PC-3 (cell line): ENCODE measurements at regions of chr2 and their contacts with region 1.

Region 1: DNA sequence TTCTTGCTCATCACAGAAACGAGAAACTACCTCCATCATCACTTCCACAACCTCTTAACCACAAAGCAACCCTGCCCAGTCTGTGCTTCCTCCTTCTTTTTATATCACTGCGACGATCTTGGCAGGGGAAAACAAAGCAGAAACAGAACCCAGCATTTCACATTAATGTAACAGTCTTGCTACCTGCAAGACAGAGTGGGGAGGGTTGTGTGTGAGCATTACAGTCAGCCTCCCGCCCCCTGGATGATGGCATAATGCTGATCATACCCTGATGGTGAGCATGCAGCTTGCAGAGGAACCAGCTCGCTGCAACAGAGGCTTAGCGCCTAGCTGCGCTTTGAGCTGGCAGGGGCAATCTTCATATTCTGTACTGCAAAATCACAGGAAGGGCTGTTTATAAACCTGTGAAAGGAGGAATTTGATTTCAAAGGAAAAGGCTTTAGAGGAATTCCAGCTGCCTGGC is 376.1 kb downstream of the IRS1 start:
- DNase-seq: peak; percentile 80
- ATAC-seq: peak; percentile 31
- H3K4me3 ChIP-seq: peak overlapping the region; percentile 33; the same call in 1 of the 2 replicates
- H3K27ac ChIP-seq: peak overlapping the region; percentile 95
- H3K4me1 ChIP-seq: peaks cover 56% of the 10 kb centered on the region
- H3K27me3 ChIP-seq: no peaks in the 10 kb centered on the region
- CTCF ChIP-seq: no peak

Region 2: GRCh38 chr2:225889446-225889850 is 534.1 kb before region 1 on chr2:
- CTCF ChIA-PET with region 1: no interaction called
- POLR2A ChIA-PET with region 1: no interaction called
- intact Hi-C with region 1: loop called (anchors 5 kb)
- DNase-seq: peak; percentile 75
- ATAC-seq: peak; percentile 94
- H3K4me3 ChIP-seq: no peak overlapping the region
- H3K27ac ChIP-seq: peak overlapping the region; percentile 66
- H3K4me1 ChIP-seq: peaks cover 23% of the 10 kb centered on the region
- H3K27me3 ChIP-seq: no peaks in the 10 kb centered on the region
- CTCF ChIP-seq: peak; percentile 84

Region 3: GRCh38 chr2:226247289-226248275 is 175.9 kb before region 1 on chr2:
- CTCF ChIA-PET with region 1: no interaction called
- POLR2A ChIA-PET with region 1: no interaction called
- intact Hi-C with region 1: loop called (anchors 10 kb)
- DNase-seq: peak; percentile 76
- ATAC-seq: peak; percentile 92
- H3K4me3 ChIP-seq: peak overlapping the region; percentile 33; the same call in 1 of the 2 replicates
- H3K27ac ChIP-seq: peak overlapping the region; percentile 78
- H3K4me1 ChIP-seq: peaks cover 27% of the 10 kb centered on the region
- H3K27me3 ChIP-seq: no peaks in the 10 kb centered on the region
- CTCF ChIP-seq: peak; percentile 29; the same call in 1 of the 2 replicates

Region 4: DNA sequence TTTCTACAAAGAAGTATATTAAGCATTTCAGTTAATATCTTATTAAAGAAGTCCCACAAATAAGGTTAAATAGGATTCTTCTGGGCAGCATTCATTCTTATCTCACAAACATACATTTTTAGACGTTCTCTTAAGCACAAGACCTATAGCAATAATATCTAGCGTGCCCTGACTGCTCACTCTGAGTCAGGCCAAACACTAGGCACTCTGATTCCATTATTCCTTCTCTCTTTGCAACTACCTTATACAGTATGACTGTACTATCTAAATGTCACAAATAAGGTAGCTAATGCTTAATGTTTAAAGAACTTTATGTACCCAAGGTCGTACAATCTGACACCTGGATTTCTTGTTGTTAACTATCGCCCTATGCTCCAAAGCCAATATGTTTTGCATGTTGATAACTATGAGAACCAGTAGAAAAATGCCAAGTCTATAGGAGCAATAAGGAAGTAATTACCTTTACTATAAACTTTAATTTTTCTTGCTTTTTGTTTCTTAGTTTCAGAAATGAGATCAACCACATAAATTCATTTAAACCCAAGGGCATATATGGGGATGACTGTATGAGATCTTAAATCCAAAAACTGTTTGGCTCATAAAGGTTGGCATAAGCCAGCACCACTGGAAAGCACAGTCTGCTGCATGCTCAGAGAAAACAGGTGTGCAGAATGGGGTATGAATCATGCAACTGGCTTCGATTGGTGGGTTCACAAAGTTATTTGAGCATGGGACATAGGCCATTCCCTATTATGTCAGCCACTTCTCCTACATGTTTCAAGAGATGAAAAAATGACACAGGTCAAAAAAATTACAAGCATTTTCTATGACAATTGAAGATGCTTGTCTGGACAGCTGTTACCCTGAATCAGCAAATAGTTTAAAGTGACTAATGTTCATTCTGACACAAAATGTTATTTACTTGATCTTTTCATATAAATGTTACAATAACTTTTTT is 24.1 kb after region 1 on chr2:
- CTCF ChIA-PET with region 1: no interaction called
- POLR2A ChIA-PET with region 1: interaction called, 7 read pairs
- intact Hi-C with region 1: loop called (anchors 2 kb)
- DNase-seq: peak; percentile 84
- ATAC-seq: peak; percentile 78
- H3K4me3 ChIP-seq: no peak overlapping the region
- H3K27ac ChIP-seq: no peak overlapping the region
- H3K4me1 ChIP-seq: peaks cover 15% of the 10 kb centered on the region
- H3K27me3 ChIP-seq: no peaks in the 10 kb centered on the region
- CTCF ChIP-seq: no peak

Region 5: DNA sequence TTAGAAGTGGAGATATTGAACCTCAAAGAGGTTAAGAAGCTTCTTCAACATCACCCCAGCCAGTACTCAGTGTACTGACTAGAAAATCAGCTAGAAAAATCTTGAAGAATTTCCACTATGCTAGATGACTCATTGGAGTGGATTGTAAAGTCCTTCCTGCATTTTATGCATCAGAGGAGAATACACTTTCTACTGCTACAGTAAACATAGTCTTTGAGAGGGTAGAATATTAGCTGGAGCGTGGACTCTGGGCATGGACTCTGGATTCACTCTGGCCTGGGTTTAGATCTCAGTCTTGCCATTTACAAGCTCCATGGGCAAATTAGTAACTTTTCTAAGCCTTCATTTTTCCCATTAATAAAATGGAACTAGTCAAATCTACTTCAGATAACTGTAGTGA is 160.2 kb after region 1 on chr2:
- CTCF ChIA-PET with region 1: no interaction called
- POLR2A ChIA-PET with region 1: no interaction called
- intact Hi-C with region 1: loop called (anchors 10 kb)
- DNase-seq: peak; percentile 94
- ATAC-seq: peak; percentile 98
- H3K4me3 ChIP-seq: no peak overlapping the region
- H3K27ac ChIP-seq: peak overlapping the region; percentile 33; the same call in 1 of the 2 replicates
- H3K4me1 ChIP-seq: peaks cover 23% of the 10 kb centered on the region
- H3K27me3 ChIP-seq: no peaks in the 10 kb centered on the region
- CTCF ChIP-seq: no peak

Region 6: GRCh38 chr2:226649871-226650660 is 226.5 kb after region 1 on chr2:
- CTCF ChIA-PET with region 1: no interaction called
- POLR2A ChIA-PET with region 1: interaction called, 3 read pairs
- intact Hi-C with region 1: loop called (anchors 1 kb)
- DNase-seq: peak; percentile 98
- ATAC-seq: peak; percentile 91
- H3K4me3 ChIP-seq: no peak overlapping the region
- H3K27ac ChIP-seq: peak overlapping the region; percentile 97
- H3K4me1 ChIP-seq: peaks cover 43% of the 10 kb centered on the region
- H3K27me3 ChIP-seq: no peaks in the 10 kb centered on the region
- CTCF ChIP-seq: no peak